H1 (cell line): ENCODE measurements at regions of chr12 and their contacts with region 1.

Region 1: DNA sequence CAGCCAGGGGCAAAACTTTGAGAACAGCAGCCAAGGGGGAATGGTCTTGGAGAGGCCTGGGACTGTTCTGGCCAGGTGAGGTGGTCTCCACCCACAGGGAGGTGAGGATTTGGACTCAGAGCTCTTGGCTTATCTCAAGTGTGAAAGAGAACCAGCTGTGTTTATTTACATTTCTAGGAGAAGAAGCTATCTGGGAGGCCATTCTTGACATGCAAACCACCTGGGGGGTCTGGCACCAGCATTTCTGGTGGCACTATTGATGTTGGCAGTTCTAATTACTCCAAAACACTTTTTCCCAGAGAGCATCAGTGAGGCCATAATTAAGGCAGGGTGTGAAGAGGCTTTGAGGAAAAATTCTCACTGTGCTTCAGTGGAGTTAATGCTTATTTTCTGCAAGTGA is 95.1 kb downstream of the CAND1 start:
- DNase-seq: no peak
- H3K4me3 ChIP-seq: no peak overlapping the region
- H3K27ac ChIP-seq: no peak overlapping the region
- H3K4me1 ChIP-seq: peaks cover 0 to 3% (median 0%) of the 10 kb centered on the region in 4 experiments; a peak in 1 of 7 replicates
- H3K27me3 ChIP-seq: no peaks in the 10 kb centered on the region
- CTCF ChIP-seq: no peak
- EP300 ChIP-seq: no peak
- POLR2A ChIP-seq: no peak
- RAD21 ChIP-seq: no peak

Region 2: GRCh38 chr12:67377522-67377921 is 13.3 kb after region 1 on chr12:
- CTCF ChIA-PET with region 1: interaction called, 10 read pairs
- POLR2A ChIA-PET with region 1: no interaction called
- DNase-seq: no peak
- H3K4me3 ChIP-seq: no peak overlapping the region
- H3K27ac ChIP-seq: no peak overlapping the region
- H3K4me1 ChIP-seq: no peaks in the 10 kb centered on the region
- H3K27me3 ChIP-seq: no peaks in the 10 kb centered on the region
- CTCF ChIP-seq: no peak
- EP300 ChIP-seq: no peak
- POLR2A ChIP-seq: no peak
- RAD21 ChIP-seq: no peak